Activated T-helper 2 cell treated with anti-CD3 and anti-CD28 coated beads, Interferon-gamma antibody, Interleukin-2, Interleukin-4, amounts not matched to agents 10 μg/mL and 5 μg/mL and 100 μg/mL, durations not matched to agents 14 hours and 24 hours and 36 hours (primary cell): ENCODE measurements at regions of chr2 and their contacts with region 1.

Region 1: GRCh38 chr2:20578895-20579825 is 71.7 kb downstream of the HS1BP3 start:
- DNase-seq: no peak
- H3K4me3 Mint-ChIP-seq: no peak overlapping the region
- H3K27ac Mint-ChIP-seq: peak overlapping the region; percentile 79
- H3K4me1 Mint-ChIP-seq: peaks cover 40% of the 10 kb centered on the region
- H3K27me3 Mint-ChIP-seq: no peaks in the 10 kb centered on the region

Region 2: GRCh38 chr2:20350753-20351554 is 228.2 kb before region 1 on chr2 and contains the start of gene PUM2:
- intact Hi-C with region 1: loop called (anchors 1 kb)
- DNase-seq: peak; percentile 97
- H3K4me3 Mint-ChIP-seq: peak within 1 kb of the TSS; percentile 93
- H3K27ac Mint-ChIP-seq: peak within 1 kb of the TSS; percentile 92
- H3K4me1 Mint-ChIP-seq: peaks cover 34% of the 10 kb centered on the region
- H3K27me3 Mint-ChIP-seq: no peaks in the 10 kb centered on the region
- total RNA-seq, gene PUM2: 121 and 127 TPM in 2 replicates

Region 3: DNA sequence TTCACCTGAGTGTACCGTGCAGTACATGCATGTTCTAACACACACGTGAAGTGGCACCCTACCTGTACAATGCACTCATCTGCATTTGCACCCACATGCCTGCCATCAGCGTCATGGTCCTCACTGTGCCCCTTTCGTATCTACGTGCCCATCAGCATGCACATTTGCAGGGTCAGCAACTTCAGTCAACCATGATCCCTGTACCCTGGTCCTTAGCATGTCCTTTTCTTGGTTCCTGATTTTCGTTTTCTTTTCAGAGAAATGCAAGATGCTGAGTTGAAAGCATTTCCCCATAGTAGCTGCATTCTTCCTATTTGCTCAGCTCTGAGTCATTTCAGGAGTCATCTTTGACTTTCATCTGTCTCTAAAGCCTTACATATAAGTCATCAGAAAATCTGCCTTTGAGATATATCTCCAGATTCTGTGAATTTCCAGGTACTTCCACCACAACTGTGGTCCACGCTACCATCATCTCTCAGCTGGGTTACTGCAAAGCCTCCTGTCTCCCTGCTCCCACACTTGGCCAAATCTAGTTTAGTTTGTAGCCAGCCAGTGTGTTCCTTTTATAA is 213.8 kb before region 1 on chr2:
- intact Hi-C with region 1: loop called (anchors 1 kb)
- DNase-seq: peak; percentile 52
- H3K4me3 Mint-ChIP-seq: peak overlapping the region; percentile 9
- H3K27ac Mint-ChIP-seq: peak overlapping the region; percentile 51
- H3K4me1 Mint-ChIP-seq: peaks cover 25% of the 10 kb centered on the region
- H3K27me3 Mint-ChIP-seq: peaks cover 4% of the 10 kb centered on the region

Region 4: DNA sequence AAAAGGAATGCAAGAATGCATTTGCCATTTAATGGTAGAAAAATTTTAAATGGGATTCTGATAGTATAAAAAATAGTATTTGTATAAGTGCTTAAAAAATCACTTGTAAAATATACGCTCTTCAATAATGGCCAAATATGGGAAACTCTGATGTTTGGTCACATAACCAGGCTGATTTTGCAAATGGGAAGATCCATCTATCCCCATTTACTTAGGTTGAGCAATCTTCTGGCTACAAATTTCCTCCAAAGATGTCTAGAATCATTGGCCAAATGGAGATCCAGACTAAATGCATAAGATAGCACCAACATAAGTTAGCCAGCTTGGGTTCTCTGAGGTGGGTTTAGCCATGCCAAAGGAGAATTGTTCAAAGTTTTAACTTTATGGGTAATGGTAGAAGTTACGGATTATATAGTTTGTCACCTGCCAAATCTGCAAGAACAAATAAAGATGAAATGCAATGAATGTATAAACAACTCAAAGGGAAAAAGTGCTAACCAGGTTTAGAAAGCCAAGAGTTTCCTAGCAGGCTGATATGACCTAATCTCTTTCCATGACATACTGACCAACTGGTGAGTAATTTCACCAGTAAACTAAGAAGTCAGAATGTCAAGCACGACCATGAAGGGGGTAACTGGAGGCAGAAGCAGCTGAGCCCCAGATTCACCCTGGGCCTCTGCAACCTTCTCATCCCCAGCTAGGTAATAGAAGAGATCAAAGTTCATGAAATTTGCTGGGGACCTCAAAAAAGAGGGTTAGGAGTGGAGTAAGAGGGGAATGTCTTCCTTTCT is 122.3 kb before region 1 on chr2:
- intact Hi-C with region 1: loop called (anchors 2 kb)
- DNase-seq: no peak
- H3K4me3 Mint-ChIP-seq: no peak overlapping the region
- H3K27ac Mint-ChIP-seq: peak overlapping the region; percentile 80
- H3K4me1 Mint-ChIP-seq: peaks cover 13% of the 10 kb centered on the region
- H3K27me3 Mint-ChIP-seq: peaks cover 28% of the 10 kb centered on the region

Region 5: DNA sequence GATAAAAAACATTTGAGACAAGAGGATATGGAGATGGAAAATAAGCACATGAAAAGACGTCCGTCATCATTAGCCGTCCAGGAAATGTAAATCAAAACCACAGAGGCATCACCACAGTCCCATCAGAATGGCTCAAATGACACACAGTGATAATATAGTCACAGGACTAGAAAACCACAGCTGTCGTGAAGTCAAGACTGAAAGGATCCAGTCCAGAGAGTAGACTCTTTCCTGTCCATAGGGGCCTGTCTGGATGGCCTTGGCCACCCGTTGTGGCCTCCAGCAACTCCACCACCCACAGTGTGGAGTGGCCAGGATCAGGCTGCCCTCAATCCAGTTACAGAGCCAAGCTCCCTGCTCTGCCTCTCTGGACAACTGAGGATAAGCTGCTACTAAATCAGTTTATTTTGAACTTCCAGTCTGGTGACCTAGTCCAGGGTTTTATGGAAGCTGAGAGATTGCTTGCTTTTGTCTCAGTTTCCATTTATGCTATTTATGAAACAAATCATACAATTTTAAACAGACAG is 71.9 kb before region 1 on chr2:
- intact Hi-C with region 1: loop called (anchors 5 kb)
- DNase-seq: no peak
- H3K4me3 Mint-ChIP-seq: no peak overlapping the region
- H3K27ac Mint-ChIP-seq: peak overlapping the region; percentile 76
- H3K4me1 Mint-ChIP-seq: peaks cover 8% of the 10 kb centered on the region
- H3K27me3 Mint-ChIP-seq: no peaks in the 10 kb centered on the region

Region 6: DNA sequence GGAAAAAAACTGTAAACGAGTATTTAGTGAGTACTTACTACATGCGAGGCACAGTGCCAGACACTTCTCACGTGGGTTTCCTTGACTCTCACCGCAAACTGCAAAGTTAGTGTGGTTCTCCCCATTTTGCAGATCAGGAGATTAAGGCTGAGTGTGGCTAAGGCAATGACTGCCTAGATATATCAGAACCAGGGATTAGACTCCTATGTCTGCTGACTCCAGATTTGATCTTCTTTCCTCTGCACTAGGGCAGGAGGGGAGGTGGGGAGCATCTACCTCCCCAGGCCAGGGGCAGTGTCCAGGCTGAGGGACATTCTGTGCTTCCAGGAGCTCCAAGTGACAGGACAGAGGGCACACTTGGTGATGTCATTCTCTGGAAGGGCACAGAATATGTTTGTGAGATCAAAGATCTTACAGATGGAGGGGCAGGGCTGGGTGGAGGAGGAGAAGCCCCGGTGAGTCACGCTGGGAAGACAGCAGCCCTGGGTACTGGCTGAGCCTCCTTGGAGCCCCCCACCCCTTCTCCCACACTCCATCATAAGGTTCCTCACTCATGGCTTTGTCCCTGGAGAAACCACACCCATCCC is 39.9 kb before region 1 on chr2:
- intact Hi-C with region 1: loop called (anchors 5 kb)
- DNase-seq: no peak
- H3K4me3 Mint-ChIP-seq: no peak overlapping the region
- H3K27ac Mint-ChIP-seq: peak overlapping the region; percentile 34
- H3K4me1 Mint-ChIP-seq: peaks cover 4% of the 10 kb centered on the region
- H3K27me3 Mint-ChIP-seq: no peaks in the 10 kb centered on the region

Region 7: DNA sequence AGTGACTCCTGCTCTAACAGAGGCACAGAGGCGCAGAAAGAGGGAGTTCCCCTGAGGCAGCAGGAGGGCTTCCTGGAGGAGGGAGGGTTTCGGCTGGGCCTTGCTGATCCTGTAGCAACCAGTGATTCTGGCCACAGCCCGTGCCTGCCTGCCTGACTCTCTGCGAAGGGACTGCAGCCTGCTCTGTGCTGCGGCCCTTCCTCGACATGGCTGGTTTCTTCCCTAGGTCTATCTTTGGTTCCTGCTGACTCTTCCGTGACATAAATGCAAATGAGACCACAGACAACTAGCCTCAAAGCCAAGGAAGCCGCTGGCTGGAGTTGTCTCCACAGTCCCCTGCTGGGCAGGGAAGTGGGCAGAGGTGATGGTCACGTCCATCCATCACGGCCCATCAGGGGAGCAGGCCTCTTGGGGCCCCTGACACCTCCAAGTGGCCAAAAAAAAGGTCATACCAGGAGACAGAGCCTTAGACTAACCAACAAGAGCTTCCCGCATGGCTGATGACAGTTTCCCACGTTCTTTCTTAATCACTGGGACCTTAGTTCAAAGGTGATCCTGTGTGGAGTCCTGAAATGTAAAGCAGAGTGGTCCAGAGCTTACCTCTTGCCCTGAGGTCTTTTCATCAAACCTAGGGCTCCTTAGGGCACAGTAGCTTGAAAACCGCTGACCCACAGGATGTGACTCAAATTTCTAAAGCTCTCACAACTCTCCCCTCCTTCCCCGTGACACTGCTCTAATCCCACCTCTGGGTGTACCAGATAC is 16.5 kb after region 1 on chr2:
- intact Hi-C with region 1: no loop called
- DNase-seq: no peak
- H3K4me3 Mint-ChIP-seq: peak overlapping the region; percentile 23
- H3K27ac Mint-ChIP-seq: peak overlapping the region; percentile 81
- H3K4me1 Mint-ChIP-seq: peaks cover 15% of the 10 kb centered on the region
- H3K27me3 Mint-ChIP-seq: no peaks in the 10 kb centered on the region

Region 8: GRCh38 chr2:20642055-20642971 is 63.2 kb after region 1 on chr2:
- intact Hi-C with region 1: loop called (anchors 5 kb)
- DNase-seq: peak; percentile 52
- H3K4me3 Mint-ChIP-seq: no peak overlapping the region
- H3K27ac Mint-ChIP-seq: peak overlapping the region; percentile 5
- H3K4me1 Mint-ChIP-seq: no peaks in the 10 kb centered on the region
- H3K27me3 Mint-ChIP-seq: no peaks in the 10 kb centered on the region